ENCODE measurements at regions of chr5 and their contacts with region 1.

Region 1: DNA sequence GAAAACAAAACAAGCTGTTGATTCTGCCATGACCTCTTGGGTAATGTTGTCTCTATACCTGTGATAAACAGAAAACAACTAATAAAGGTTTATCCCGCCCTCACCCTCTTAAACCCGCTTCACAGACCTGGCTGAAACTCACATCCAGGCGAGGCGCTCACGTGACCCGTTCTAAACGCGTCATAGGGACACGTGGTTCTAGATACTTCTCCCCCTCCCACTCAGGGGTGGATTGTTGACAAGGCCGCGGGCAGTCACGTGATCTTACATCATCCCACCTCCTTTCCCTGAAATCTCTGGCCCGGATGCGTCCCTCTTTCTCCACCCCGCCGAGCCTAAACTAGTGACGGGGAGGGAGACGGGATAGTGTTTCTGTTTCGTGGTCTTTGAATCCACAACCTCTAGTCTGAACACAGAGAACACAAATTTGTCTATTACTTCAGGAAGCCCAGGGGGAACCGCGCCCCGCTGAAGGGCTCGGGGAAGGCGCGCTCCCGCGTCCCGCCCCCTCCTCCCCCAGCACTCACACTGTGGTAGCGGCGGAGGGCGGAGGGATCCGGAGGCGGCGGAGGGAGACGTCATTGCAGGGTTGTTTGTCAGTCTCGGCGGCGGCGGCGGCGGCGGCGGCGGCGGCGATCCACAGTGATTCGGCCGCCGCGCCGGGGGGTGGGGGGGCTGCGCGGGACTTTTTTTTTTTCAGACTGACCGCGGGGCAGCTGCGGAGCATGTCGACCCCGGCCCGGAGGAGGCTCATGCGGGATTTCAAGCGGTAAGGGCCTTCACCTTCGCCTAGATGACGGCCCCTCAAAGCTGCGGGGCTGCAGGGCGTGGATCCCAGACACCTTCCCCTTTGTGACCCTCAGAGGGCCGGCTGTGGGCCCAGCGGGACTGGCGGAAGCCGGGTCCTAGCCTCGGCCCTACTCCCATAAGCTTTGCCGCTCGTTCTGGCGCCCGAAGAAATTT is at the start of gene UBE2B:
- DNase-seq: peak; percentile 95
- ATAC-seq: peak; percentile 75
- H3K4me3 Mint-ChIP-seq: peak within 1 kb of the TSS; percentile 98
- H3K27ac Mint-ChIP-seq: peak within 1 kb of the TSS; percentile 100
- H3K4me1 Mint-ChIP-seq: peaks cover 54% of the 10 kb centered on the region
- H3K27me3 Mint-ChIP-seq: no peaks in the 10 kb centered on the region
- CTCF ChIP-seq: no peak
- total RNA-seq, gene UBE2B: 60.4 and 64.4 TPM in 2 replicates

Region 2: DNA sequence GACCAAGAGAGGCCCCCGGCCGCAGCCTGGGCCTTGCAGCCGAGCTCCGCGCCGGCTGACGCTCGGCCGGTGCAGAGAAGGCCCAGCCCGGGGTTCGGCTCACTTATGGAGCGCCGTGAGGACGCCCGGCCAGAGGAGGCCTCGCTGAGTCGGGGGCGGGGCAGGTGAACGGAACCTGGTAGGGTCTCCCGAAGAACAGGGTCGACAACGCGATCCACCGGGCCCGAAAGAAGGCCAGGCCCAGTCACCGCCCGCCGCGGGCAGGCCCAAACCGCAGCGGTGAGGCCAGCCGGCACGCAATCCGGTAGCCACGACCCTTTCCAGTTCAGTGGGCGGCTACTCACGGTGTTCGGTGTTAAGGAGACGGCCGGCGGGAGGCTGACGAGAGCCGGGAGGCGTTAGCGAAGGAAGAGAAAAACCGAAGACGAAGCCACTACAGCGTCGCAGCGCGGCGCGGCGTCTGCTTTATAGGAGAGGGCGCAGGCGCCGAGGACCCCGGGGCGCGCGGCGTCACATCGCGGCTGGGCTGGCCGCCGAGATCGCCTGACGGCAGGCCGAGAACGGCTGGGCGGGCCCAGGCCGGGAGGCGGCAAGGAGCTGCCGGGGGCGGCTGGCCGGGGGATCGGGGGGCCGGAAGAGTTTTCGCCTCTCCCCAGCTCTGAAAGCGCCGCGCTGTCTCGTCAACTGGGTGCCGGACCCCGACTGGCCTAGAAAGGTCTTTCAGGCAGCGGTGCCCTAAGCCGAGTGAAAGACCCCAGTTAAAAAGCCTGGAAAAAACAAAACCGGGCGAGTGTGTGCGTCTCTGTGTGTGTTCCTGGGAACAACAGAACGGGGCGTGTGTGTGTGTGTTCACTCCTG is 194.4 kb before region 1 on chr5 and contains the start of gene SKP1:
- CTCF ChIA-PET with region 1: no interaction called
- POLR2A ChIA-PET with region 1: interaction called, 16 read pairs
- intact Hi-C with region 1: loop called (anchors 1 kb)
- DNase-seq: peak; percentile 91
- ATAC-seq: peak; percentile 86
- H3K4me3 Mint-ChIP-seq: peak within 1 kb of the TSS; percentile 93
- H3K27ac Mint-ChIP-seq: peak within 1 kb of the TSS; percentile 96
- H3K4me1 Mint-ChIP-seq: peaks cover 26% of the 10 kb centered on the region
- H3K27me3 Mint-ChIP-seq: no peaks in the 10 kb centered on the region
- CTCF ChIP-seq: no peak
- total RNA-seq, gene SKP1: 193 and 211 TPM in 2 replicates

Region 3: DNA sequence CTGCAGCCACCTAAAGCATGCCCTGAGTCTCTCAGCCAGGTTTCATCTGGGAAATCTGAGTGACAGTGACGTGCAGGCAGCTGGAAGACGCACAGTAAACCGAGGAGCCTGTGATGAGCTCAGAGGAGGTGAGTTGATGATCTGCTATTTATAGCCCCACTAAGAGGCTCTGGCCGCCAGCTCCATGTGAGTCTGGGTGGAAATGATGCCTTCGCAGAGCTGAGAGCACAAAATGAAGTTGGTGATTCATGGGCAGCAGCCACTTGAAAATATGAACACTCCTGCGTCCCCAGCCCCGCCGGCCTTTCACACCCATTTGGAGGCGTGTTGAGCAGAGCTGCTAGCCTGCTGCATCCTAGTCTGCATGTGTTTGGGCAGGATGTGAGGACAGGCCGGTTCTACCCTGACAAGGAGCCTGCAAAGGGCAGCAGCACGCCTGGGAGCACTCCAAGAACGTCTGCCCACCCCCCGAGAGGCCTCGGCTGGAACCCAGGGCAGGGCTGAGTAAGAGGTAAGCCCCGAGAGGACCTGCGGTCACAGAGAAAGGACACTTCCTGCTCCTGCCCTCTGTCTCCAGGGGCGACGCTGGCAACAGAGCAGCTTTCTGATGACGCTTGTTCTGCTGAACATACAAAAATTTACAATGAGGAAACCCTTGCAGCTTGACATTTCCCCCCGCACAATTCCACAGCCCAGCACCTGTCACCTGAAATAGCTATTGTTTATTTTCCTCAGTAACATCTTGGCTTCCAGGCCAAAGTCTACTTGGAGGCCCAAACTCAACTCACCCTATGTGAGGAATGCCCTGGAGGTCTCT is 65.6 kb after region 1 on chr5:
- CTCF ChIA-PET with region 1: no interaction called
- POLR2A ChIA-PET with region 1: no interaction called
- intact Hi-C with region 1: loop called (anchors 2 kb)
- DNase-seq: peak; percentile 64
- ATAC-seq: peak; percentile 95
- H3K4me3 Mint-ChIP-seq: peak overlapping the region; percentile 56
- H3K27ac Mint-ChIP-seq: peak overlapping the region; percentile 68
- H3K4me1 Mint-ChIP-seq: peaks cover 25% of the 10 kb centered on the region
- H3K27me3 Mint-ChIP-seq: no peaks in the 10 kb centered on the region
- CTCF ChIP-seq: no peak

Region 4: DNA sequence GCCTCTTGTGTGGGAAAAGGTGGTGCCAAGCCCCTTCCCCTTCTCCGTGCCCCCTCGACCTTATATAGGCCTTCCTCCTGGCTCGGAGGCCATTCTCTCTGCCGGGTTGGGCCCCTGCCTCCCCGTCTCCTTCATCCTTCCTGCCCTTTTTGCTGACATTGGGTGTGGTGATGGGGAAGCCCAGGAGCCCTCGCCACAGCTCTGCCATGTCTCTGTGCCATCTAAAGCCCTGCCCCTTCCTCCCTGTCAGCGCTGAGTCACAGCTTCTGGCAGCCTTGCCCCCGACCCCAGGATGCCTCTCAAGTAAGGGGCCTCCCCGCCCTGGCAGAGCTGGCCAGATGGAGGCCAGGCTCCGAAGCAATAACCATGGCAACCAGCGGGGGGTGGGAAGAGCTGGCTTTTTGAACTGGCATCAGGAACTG is 184.7 kb after region 1 on chr5:
- CTCF ChIA-PET with region 1: no interaction called
- POLR2A ChIA-PET with region 1: interaction called, 35 read pairs
- intact Hi-C with region 1: loop called (anchors 1 kb)
- DNase-seq: peak; percentile 75
- ATAC-seq: peak; percentile 73
- H3K4me3 Mint-ChIP-seq: peak overlapping the region; percentile 75
- H3K27ac Mint-ChIP-seq: peak overlapping the region; percentile 98
- H3K4me1 Mint-ChIP-seq: peaks cover 64% of the 10 kb centered on the region
- H3K27me3 Mint-ChIP-seq: no peaks in the 10 kb centered on the region
- CTCF ChIP-seq: no peak

Region 5: GRCh38 chr5:134594797-134595457 is 223.8 kb after region 1 on chr5:
- CTCF ChIA-PET with region 1: no interaction called
- POLR2A ChIA-PET with region 1: no interaction called
- intact Hi-C with region 1: no loop called
- DNase-seq: no peak
- ATAC-seq: no peak
- H3K4me3 Mint-ChIP-seq: no peak overlapping the region
- H3K27ac Mint-ChIP-seq: no peak overlapping the region
- H3K4me1 Mint-ChIP-seq: no peaks in the 10 kb centered on the region
- H3K27me3 Mint-ChIP-seq: no peaks in the 10 kb centered on the region
- CTCF ChIP-seq: no peak

Region 6: DNA sequence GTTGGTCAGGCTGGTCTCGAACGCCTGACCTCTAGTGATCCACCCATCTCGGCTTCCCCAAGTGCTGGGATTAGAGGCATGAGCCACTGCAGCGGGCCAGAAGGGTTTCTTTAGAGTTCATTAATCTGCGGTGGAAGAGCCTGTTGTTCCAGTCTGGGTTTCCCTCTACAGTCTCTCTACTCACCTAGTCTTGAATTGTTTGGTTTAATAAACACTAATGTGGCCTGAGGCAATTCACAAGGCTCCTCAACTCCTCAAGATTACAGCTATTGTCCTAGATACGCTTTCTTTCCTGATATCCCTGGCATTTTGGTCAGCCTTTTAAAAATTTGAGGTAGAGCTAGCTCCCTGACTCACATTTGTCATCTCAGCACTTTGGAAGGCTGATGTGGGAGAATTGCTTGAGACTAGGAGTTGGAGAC is 266.0 kb after region 1 on chr5:
- CTCF ChIA-PET with region 1: no interaction called
- POLR2A ChIA-PET with region 1: no interaction called
- intact Hi-C with region 1: loop called (anchors 1 kb)
- DNase-seq: no peak
- ATAC-seq: no peak
- H3K4me3 Mint-ChIP-seq: no peak overlapping the region
- H3K27ac Mint-ChIP-seq: no peak overlapping the region
- H3K4me1 Mint-ChIP-seq: peaks cover 2% of the 10 kb centered on the region
- H3K27me3 Mint-ChIP-seq: no peaks in the 10 kb centered on the region
- CTCF ChIP-seq: no peak

Region 7: DNA sequence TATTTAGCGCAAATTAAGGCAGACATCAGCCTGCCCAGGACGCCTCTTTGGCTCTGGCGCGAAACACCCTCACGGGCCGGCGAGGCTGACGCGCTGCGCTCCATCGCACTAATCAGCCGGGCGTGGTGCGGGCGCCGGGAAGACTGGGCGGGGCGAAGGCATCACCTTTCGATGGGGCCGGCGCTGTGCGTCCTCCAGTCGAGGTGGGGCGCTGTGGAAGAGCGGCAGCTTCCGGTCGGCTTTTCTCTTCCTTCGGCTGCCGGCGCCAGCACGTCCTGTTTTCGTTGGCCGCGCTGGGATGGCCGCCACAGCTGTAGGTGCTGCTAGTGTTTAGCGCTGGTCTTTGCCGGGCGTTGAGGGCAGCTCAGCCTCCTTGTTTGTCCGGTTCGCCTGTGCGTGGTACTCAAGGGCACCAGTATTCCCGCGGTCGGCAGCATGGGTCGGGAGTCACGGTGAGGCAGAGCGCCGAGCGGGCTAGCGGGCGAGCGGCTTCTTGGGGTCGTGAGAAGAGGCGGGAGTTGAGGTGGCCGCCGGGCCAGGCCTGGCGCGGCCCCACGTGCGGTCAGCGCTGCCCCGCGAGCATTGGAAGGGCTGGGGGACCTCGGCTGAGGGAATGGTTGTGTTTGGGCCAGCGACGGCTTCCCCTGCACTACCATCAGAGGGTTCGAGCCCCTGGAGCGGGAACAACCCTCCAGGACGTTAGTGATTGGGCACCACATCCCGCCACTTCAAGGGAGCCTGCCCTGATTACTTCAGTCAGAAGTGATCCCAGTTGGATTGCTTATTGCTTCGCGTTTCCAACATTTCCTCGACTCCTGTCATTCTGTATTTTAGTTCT is 387.6 kb after region 1 on chr5 and contains the start of gene DDX46:
- CTCF ChIA-PET with region 1: no interaction called
- POLR2A ChIA-PET with region 1: no interaction called
- intact Hi-C with region 1: loop called (anchors 5 kb)
- DNase-seq: peak; percentile 95
- ATAC-seq: peak; percentile 99
- H3K4me3 Mint-ChIP-seq: peak within 1 kb of the TSS; percentile 100
- H3K27ac Mint-ChIP-seq: peak within 1 kb of the TSS; percentile 94
- H3K4me1 Mint-ChIP-seq: peaks cover 36% of the 10 kb centered on the region
- H3K27me3 Mint-ChIP-seq: no peaks in the 10 kb centered on the region
- CTCF ChIP-seq: no peak
- total RNA-seq, gene DDX46: 68.8 and 74.1 TPM in 2 replicates

Measured in activated B cell treated with CpG ODN at 0.5 μM for 24 hours (primary cell).